ENCODE measurements at regions of chr15 and their contacts with region 1.

Region 1: GRCh38 chr15:60493166-60493565 is 14.2 kb upstream of the ICE2 start:
- DNase-seq: peak; percentile 69
- ATAC-seq: peak; percentile 61; the same call in 2 of the 3 replicates
- H3K4me3 ChIP-seq: no peak overlapping the region
- H3K27ac ChIP-seq: no peak overlapping the region
- H3K4me1 ChIP-seq: peaks cover 42% of the 10 kb centered on the region
- H3K27me3 ChIP-seq: no peaks in the 10 kb centered on the region
- CTCF ChIP-seq: no peak
- EP300 ChIP-seq: peak in 1 of 2 experiments; percentile 64; a peak in 2 of 4 replicates
- POLR2A ChIP-seq: no peak
- RAD21 ChIP-seq: no peak

Region 2: DNA sequence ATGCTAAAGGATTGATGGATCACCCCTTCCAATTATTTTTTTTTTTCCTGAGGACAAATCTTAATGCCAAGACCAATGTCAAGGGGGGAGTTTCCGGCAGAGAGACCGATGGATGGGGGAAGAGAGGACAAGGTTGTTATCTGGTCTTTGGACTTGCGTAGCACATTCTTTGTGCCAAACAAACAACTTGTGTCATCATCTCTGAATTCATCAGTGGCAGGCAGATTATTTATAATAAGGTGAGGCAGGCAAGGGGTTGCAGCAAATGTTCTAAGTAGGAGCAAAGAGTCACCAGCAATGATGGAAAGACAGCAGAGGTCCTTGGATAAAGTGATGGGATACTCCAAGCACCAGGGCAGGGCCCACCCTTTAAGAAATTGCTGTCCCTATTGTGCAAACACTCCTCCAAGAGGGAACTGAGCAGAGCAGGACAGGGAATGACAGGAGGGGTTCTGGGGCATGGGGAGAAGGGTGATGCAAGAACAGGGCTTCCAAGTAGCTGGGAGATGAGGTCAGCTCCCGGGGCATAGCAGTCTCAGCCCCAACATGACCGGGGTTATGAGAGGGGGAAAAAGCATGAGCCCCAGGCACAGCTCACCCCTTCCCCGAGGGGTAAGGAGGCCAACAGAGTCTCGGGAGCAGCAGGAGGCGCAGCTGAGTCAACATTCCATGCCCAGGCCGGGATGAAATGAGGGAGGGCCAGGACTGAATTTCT is 152.8 kb before region 1 on chr15:
- CTCF ChIA-PET with region 1: no interaction called
- POLR2A ChIA-PET with region 1: no interaction called
- in situ Hi-C with region 1: no loop called
- intact Hi-C with region 1: no loop called
- DNase-seq: peak; percentile 31
- ATAC-seq: peak; percentile 53
- H3K4me3 ChIP-seq: peak overlapping the region in 1 of 3 experiments; percentile 14; a peak in 1 of 6 replicates
- H3K27ac ChIP-seq: no peak overlapping the region
- H3K4me1 ChIP-seq: peaks cover 31% of the 10 kb centered on the region
- H3K27me3 ChIP-seq: peaks cover 0 to 5% of the 10 kb centered on the region in 2 experiments; a peak in 1 of 5 replicates
- CTCF ChIP-seq: peak; percentile 48
- EP300 ChIP-seq: no peak; a peak in 1 of 4 replicates
- POLR2A ChIP-seq: no peak
- RAD21 ChIP-seq: no peak

Region 3: GRCh38 chr15:60478566-60479360 is 14.4 kb before region 1 on chr15 and contains the start of gene ICE2:
- CTCF ChIA-PET with region 1: no interaction called
- POLR2A ChIA-PET with region 1: interaction called, 3 read pairs
- in situ Hi-C with region 1: no loop called
- intact Hi-C with region 1: loop called (anchors 1 kb)
- DNase-seq: peak; percentile 89
- ATAC-seq: peak; percentile 94
- H3K4me3 ChIP-seq: peak within 1 kb of the TSS; percentile 67 to 94 (median 90)
- H3K27ac ChIP-seq: peak within 1 kb of the TSS; percentile 93
- H3K4me1 ChIP-seq: peaks cover 43% of the 10 kb centered on the region
- H3K27me3 ChIP-seq: no peaks in the 10 kb centered on the region; a peak in 1 of 5 replicates
- CTCF ChIP-seq: peak; percentile 57
- EP300 ChIP-seq: no peak
- POLR2A ChIP-seq: peak; percentile 92 to 95
- RAD21 ChIP-seq: no peak; the same call in none of the 2 replicates
- total RNA-seq, gene ICE2: 26.4 and 40.9 TPM in 2 replicates

Region 4: GRCh38 chr15:60563539-60564404 is 70.6 kb after region 1 on chr15:
- CTCF ChIA-PET with region 1: no interaction called
- POLR2A ChIA-PET with region 1: no interaction called
- in situ Hi-C with region 1: no loop called
- intact Hi-C with region 1: no loop called
- DNase-seq: no peak
- ATAC-seq: no peak
- H3K4me3 ChIP-seq: no peak overlapping the region
- H3K27ac ChIP-seq: no peak overlapping the region
- H3K4me1 ChIP-seq: peaks cover 39% of the 10 kb centered on the region
- H3K27me3 ChIP-seq: no peaks in the 10 kb centered on the region
- CTCF ChIP-seq: no peak
- EP300 ChIP-seq: no peak
- POLR2A ChIP-seq: no peak
- RAD21 ChIP-seq: no peak

Measured in HepG2 (cell line).